ENCODE measurements at regions of chr7 and their contacts with region 1.

Region 1: GRCh38 chr7:99143853-99144672 is at the start of gene SMURF1:
- DNase-seq: peak in 1 of 2 experiments; percentile 79
- H3K4me3 ChIP-seq: peak within 1 kb of the TSS; percentile 75
- H3K27ac ChIP-seq: peak within 1 kb of the TSS; percentile 82
- H3K4me1 ChIP-seq: peaks cover 33% of the 10 kb centered on the region
- H3K27me3 ChIP-seq: no peaks in the 10 kb centered on the region
- CTCF ChIP-seq: no peak
- total RNA-seq, gene SMURF1: 53.2 and 63.9 TPM in 2 replicates

Region 2: DNA sequence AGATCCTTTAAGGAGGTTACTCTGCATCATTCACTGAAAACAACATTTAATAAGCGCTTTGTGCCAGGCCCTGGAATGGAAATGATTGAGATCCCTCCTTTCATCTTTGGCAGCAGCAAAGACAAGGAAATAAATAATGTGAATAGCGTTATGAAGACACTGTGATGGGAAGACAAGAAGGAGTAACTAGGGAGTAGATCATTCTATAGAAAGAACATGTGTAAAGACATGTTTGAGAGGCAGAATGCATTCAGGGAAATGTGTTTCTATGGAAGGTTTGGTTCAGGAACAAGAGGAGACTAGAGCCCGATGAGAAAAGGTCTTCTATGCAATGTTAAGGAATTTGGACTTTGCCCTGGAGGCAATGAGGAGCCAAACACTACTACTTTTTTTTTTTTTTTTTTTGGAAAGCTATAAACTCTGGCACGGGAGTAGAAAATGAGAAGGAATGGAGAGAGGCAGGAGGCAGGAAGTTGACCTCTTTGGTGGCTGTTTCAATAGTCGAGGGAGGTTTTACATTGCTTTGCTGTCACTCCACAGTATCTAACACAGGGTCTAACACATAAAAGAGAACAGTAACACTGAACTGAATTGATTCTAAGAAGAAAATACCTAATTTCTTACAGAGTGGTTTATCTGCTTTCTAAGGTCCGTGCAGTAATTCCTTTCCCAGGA is 45.1 kb before region 1 on chr7:
- CTCF ChIA-PET with region 1: no interaction called
- POLR2A ChIA-PET with region 1: interaction called, 12 read pairs
- intact Hi-C with region 1: no loop called
- DNase-seq: peak; percentile 31 to 66
- H3K4me3 ChIP-seq: no peak overlapping the region
- H3K27ac ChIP-seq: peak overlapping the region; percentile 35
- H3K4me1 ChIP-seq: peaks cover 43% of the 10 kb centered on the region
- H3K27me3 ChIP-seq: no peaks in the 10 kb centered on the region
- CTCF ChIP-seq: no peak

Region 3: GRCh38 chr7:99167072-99167471 is 23.0 kb after region 1 on chr7:
- CTCF ChIA-PET with region 1: no interaction called
- POLR2A ChIA-PET with region 1: interaction called, 11 read pairs
- intact Hi-C with region 1: loop called (anchors 1 kb)
- DNase-seq: no peak
- H3K4me3 ChIP-seq: no peak overlapping the region
- H3K27ac ChIP-seq: no peak overlapping the region
- H3K4me1 ChIP-seq: peaks cover 13% of the 10 kb centered on the region
- H3K27me3 ChIP-seq: no peaks in the 10 kb centered on the region
- CTCF ChIP-seq: no peak

Region 4: GRCh38 chr7:99221866-99222265 is 77.8 kb after region 1 on chr7:
- CTCF ChIA-PET with region 1: no interaction called
- POLR2A ChIA-PET with region 1: no interaction called
- intact Hi-C with region 1: no loop called
- DNase-seq: no peak
- H3K4me3 ChIP-seq: no peak overlapping the region
- H3K27ac ChIP-seq: no peak overlapping the region
- H3K4me1 ChIP-seq: peaks cover 38% of the 10 kb centered on the region
- H3K27me3 ChIP-seq: no peaks in the 10 kb centered on the region
- CTCF ChIP-seq: no peak

Region 5: GRCh38 chr7:99267481-99267840 is 123.4 kb after region 1 on chr7:
- CTCF ChIA-PET with region 1: no interaction called
- POLR2A ChIA-PET with region 1: interaction called, 11 read pairs
- intact Hi-C with region 1: no loop called
- DNase-seq: peak; percentile 79 to 93
- H3K4me3 ChIP-seq: no peak overlapping the region
- H3K27ac ChIP-seq: peak overlapping the region; percentile 90
- H3K4me1 ChIP-seq: peaks cover 41% of the 10 kb centered on the region
- H3K27me3 ChIP-seq: no peaks in the 10 kb centered on the region
- CTCF ChIP-seq: no peak

Region 6: GRCh38 chr7:100101016-100101862 is 957.2 kb after region 1 on chr7 and contains the starts of genes AP4M1 and MCM7:
- CTCF ChIA-PET with region 1: no interaction called
- POLR2A ChIA-PET with region 1: interaction called, 19 read pairs
- intact Hi-C with region 1: no loop called
- DNase-seq: peak; percentile 96 to 100
- H3K4me3 ChIP-seq: peak within 1 kb of the TSS; percentile 99
- H3K27ac ChIP-seq: peak within 1 kb of the TSS; percentile 85
- H3K4me1 ChIP-seq: peaks cover 19% of the 10 kb centered on the region
- H3K27me3 ChIP-seq: no peaks in the 10 kb centered on the region
- CTCF ChIP-seq: no peak
- total RNA-seq, gene AP4M1: 18.1 and 26.2 TPM in 2 replicates
- total RNA-seq, gene MCM7: 195 and 238 TPM in 2 replicates

Measured in PC-9 (cell line).